Heart left ventricle (tissue), 16 donors: ENCODE measurements at regions of chr9 and their contacts with region 1.

Region 1: DNA sequence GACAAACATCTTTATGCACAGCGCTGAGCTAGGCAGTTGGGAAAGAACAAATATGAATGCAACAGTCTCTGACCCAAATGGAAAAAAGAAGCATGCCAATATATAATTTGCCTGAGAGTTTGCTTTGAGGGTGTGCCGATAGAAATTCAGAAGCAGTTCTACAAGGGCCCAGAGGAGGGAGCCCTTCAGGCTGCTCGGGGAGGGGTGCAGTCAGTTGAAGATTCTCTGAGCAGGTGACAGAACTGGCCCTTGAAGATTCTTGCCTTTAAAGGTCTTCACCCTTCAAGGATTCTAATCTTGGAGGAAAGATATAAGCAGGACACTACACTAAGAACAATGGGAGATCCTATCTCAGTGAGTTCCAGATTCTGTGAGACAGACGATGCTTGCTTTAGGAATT is 3.7 kb upstream of the PAPPA start:
- DNase-seq: no peak
- ATAC-seq: peak in 1 of 4 donors; percentile 47
- H3K4me3 ChIP-seq: no peak overlapping the region
- H3K27ac ChIP-seq: no peak overlapping the region
- H3K4me1 ChIP-seq: peaks cover 0 to 11% (median 0%) of the 10 kb centered on the region in 12 donors
- H3K27me3 ChIP-seq: peaks cover 0 to 29% (median 4%) of the 10 kb centered on the region in 9 donors
- CTCF ChIP-seq: peak; percentile 25 to 67 (median 55)
- POLR2A ChIP-seq: no peak

Region 2: DNA sequence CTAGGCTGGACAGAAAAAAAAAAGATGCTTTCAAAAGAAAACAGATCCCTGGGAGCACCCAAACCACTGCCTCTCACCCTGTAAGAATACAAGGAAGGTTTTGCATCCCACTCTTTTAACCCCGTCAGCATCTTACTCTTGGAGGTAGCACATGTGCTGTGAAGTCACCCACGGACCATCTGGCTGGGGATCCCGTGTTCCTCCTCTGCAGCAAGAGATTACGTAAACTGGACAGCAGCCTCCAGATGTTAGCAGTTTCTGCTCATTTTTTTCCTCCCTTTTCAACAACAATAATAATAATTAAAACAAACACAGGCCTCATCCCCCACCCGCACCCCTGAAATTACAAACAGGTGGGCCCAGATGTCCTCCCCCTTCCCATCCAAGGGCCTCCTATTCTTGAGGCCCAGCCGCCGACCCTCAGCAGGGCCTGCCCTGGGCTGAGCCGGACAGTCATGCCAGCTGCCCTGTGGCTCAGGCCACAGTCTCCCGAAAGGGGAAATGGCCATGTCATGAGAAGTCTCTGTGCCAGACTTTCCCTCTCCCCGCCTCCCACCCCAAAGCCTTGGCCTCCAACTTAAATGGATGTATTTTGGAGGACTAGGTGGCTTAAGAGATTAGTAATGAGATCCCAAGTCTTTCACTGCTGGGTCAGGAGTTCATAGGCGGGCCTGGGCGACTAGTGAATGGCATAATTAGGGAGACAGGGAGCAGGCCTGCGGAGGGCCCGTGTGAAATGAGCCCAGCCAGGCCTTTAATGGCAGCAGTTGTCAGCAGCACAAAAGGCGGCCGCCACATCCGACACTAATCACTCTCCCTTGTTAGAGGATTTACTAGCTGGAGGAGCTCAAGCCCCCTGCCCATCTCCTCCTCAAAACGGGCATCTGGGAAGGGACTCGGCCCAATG is 168.9 kb after region 1 on chr9:
- intact Hi-C with region 1: loop called in 1 of 10 experiments (anchors 10 kb)
- DNase-seq: peak; percentile 63 to 79 (median 70)
- ATAC-seq: peak; percentile 42 to 82 (median 70)
- H3K4me3 ChIP-seq: no peak overlapping the region
- H3K27ac ChIP-seq: peak overlapping the region in 11 of 12 donors; percentile 18 to 79 (median 51)
- H3K4me1 ChIP-seq: peaks cover 0 to 41% (median 17%) of the 10 kb centered on the region in 12 donors
- H3K27me3 ChIP-seq: no peaks in the 10 kb centered on the region
- CTCF ChIP-seq: no peak
- POLR2A ChIP-seq: no peak

Region 3: DNA sequence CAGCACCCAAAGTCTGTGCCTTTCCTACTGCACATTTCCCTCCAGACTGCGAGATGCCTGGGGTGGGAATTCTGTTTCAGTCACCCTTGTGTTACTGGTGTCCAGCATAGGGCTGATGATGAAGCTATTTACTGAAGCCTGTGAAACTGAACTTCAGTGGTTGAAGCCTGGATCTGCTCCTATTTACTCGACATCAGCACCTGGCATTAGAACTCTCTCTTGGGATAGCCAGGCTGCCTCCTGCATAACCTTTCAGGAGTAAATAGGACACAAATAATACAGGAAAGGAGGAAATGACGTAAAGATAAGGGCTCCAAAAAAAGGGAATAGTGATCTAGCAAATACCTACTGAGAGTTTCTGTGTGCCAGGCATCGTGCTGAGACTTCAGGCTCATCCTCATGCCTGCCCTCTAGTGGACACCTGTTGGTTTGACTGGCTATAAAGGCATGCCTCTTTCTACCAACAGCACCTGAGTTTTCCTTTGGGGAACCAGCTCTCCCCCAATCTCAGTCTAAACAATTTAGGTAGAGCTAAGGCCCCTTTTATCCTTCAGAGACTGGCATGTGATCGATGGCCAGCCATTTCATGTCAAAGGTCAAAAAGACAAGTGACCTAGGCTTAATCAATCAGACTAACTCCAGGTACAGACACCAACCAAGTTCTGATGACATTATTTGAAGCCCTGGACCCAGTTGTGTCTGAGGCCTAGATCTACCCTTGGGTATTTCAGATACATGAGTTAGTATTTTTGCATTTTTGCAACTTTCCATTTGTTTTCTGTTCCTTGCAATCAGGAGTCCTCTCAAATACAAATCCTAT is 345.2 kb after region 1 on chr9:
- intact Hi-C with region 1: loop called in 4 of 10 experiments (anchors 5 to 10 kb)
- DNase-seq: peak in 1 of 5 donors; percentile 27
- ATAC-seq: peak in 2 of 4 donors; percentile 27 to 45
- H3K4me3 ChIP-seq: no peak overlapping the region
- H3K27ac ChIP-seq: no peak overlapping the region
- H3K4me1 ChIP-seq: no peaks in the 10 kb centered on the region
- H3K27me3 ChIP-seq: no peaks in the 10 kb centered on the region
- CTCF ChIP-seq: peak; percentile 46 to 73 (median 61)
- POLR2A ChIP-seq: no peak

Region 4: DNA sequence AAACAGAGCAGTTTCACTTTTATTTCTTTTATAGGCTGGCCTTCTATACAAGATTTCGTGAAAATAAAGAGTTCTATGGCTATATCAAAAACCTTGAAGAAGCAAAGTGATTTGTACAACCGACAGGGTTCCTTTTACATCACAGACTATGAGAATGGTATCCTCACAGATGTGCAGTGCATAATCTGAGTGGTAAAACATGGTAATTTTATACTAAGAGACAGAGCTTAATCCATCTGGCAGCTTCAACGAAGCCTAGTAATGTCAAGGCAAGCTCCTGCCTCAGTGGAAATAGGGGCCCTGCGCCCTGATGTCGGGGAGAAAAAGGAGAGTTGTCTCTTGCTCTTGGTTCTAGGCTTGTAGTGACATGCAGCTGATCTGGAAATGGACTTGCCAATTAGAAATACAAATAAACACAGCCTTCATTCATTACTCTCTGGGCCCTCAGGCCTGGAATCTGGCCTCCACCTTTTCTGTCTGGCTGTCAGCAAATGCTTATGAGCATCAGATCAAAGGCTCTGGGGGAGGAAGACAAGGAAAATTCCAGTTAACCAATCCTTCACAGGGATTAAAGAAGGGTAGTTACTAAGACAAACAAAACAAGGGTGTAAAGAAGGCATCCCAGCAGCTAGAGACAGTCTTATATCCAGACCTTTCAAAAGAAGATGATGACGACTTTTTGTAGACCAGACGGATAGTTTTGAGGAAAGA is 503.7 kb after region 1 on chr9:
- intact Hi-C with region 1: loop called in 7 of 10 experiments (anchors 5 to 10 kb)
- DNase-seq: no peak
- ATAC-seq: no peak
- H3K4me3 ChIP-seq: no peak overlapping the region
- H3K27ac ChIP-seq: peak overlapping the region in 7 of 12 donors; percentile 4 to 61 (median 20)
- H3K4me1 ChIP-seq: peaks cover 0 to 24% (median 10%) of the 10 kb centered on the region in 12 donors
- H3K27me3 ChIP-seq: no peaks in the 10 kb centered on the region
- CTCF ChIP-seq: no peak
- POLR2A ChIP-seq: no peak